ENCODE measurements at regions of chr9 and their contacts with region 1.

Region 1: GRCh38 chr9:135590217-135591079 is 28.9 kb downstream of the PAEP start:
- DNase-seq: peak; percentile 80

Region 2: GRCh38 chr9:135294826-135295225 is 295.6 kb before region 1 on chr9:
- intact Hi-C with region 1: no loop called
- DNase-seq: peak; percentile 51

Region 3: GRCh38 chr9:135563856-135564255 is 26.6 kb before region 1 on chr9:
- intact Hi-C with region 1: loop called in 1 of 2 experiments (anchors 1 kb)
- DNase-seq: no peak